ENCODE measurements at regions of chr10 and their contacts with region 1.

Region 1: GRCh38 chr10:119165171-119166110 is at the start of gene SFXN4:
- DNase-seq: peak; percentile 76 to 87 (median 85)
- H3K4me3 ChIP-seq: peak within 1 kb of the TSS; percentile 73 to 92
- H3K4me3 Mint-ChIP-seq: peak within 1 kb of the TSS; percentile 90 to 94 (median 92)
- H3K27ac ChIP-seq: peak within 1 kb of the TSS; percentile 65
- H3K27ac Mint-ChIP-seq: peak within 1 kb of the TSS; percentile 87 to 96 (median 95)
- H3K4me1 ChIP-seq: peaks cover 20% of the 10 kb centered on the region
- H3K4me1 Mint-ChIP-seq: peaks cover 9 to 43% (median 27%) of the 10 kb centered on the region in 4 donors
- H3K27me3 ChIP-seq: no peaks in the 10 kb centered on the region
- H3K27me3 Mint-ChIP-seq: no peaks in the 10 kb centered on the region
- total RNA-seq, gene SFXN4: 17.2 to 18.5 TPM

Region 2: GRCh38 chr10:119028900-119029612 is 136.4 kb before region 1 on chr10:
- CTCF ChIA-PET with region 1: no interaction called
- POLR2A ChIA-PET with region 1: interaction called, 12 read pairs
- intact Hi-C with region 1: no loop called
- DNase-seq: peak; percentile 69 to 84 (median 73)
- H3K4me3 ChIP-seq: peak overlapping the region in 1 of 2 donors; percentile 28
- H3K4me3 Mint-ChIP-seq: peak overlapping the region; percentile 78 to 85 (median 80)
- H3K27ac ChIP-seq: no peak overlapping the region
- H3K27ac Mint-ChIP-seq: peak overlapping the region in 3 of 7 donors; percentile 64 to 73 (median 72)
- H3K4me1 ChIP-seq: peaks cover 7% of the 10 kb centered on the region
- H3K4me1 Mint-ChIP-seq: peaks cover 6 to 30% (median 15%) of the 10 kb centered on the region in 4 donors
- H3K27me3 ChIP-seq: no peaks in the 10 kb centered on the region
- H3K27me3 Mint-ChIP-seq: no peaks in the 10 kb centered on the region

Region 3: DNA sequence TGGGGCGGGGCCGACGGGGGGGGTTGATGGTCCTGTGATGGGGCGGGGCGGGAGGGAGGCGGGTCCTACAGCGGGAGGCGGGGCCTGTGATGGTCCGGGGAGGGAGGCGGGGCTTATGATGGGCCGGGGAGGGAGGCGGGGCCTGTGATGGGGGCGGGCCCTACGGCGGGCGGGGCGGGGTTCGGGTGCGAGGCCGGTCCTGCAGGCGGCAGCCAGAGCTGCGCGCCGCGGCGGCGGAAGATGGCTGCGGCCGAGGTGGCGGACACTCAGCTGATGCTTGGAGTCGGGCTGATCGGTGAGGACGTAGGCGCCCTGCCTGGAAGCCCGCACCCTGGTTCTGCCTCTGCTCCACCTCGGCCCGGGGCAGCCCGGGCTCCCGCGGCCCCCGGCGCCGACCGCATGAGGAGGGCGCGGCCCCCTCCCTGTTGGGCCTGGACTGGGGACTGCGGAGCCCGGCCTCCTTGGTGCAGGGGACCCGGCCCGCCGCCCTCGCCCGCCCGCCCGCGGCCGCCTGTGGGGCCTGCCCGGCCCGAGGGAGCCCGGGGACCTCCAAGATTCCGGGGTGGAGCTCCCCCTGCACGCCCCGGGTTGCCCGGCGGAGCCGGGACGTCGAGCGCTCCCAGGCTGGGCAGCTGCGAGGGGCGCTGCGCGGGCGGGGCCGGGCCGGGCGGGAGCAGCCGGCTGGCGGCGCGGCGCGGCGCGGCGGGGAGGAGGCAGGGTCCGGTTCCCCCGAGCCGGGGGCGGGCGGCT is 61.4 kb before region 1 on chr10 and contains the start of gene DENND10:
- CTCF ChIA-PET with region 1: interaction called, 5 read pairs
- POLR2A ChIA-PET with region 1: interaction called, 7 read pairs
- intact Hi-C with region 1: loop called (anchors 2 kb)
- DNase-seq: peak; percentile 56 to 71 (median 60)
- H3K4me3 ChIP-seq: peak within 1 kb of the TSS; percentile 52 to 59
- H3K4me3 Mint-ChIP-seq: peak within 1 kb of the TSS; percentile 79 to 88 (median 86)
- H3K27ac ChIP-seq: peak within 1 kb of the TSS; percentile 54
- H3K27ac Mint-ChIP-seq: peak within 1 kb of the TSS; percentile 72 to 95 (median 91)
- H3K4me1 ChIP-seq: peaks cover 34% of the 10 kb centered on the region
- H3K4me1 Mint-ChIP-seq: peaks cover 14 to 46% (median 34%) of the 10 kb centered on the region in 4 donors
- H3K27me3 ChIP-seq: no peaks in the 10 kb centered on the region
- H3K27me3 Mint-ChIP-seq: no peaks in the 10 kb centered on the region
- total RNA-seq, gene DENND10: 48.0 to 53.4 TPM

Region 4: GRCh38 chr10:119131512-119132240 is 33.8 kb before region 1 on chr10:
- CTCF ChIA-PET with region 1: interaction called, 4 read pairs
- POLR2A ChIA-PET with region 1: interaction called, 10 read pairs
- intact Hi-C with region 1: no loop called
- DNase-seq: peak; percentile 42 to 57 (median 50)
- H3K4me3 ChIP-seq: peak overlapping the region; percentile 3 to 44
- H3K4me3 Mint-ChIP-seq: peak overlapping the region; percentile 87 to 96 (median 92)
- H3K27ac ChIP-seq: peak overlapping the region; percentile 65
- H3K27ac Mint-ChIP-seq: peak overlapping the region; percentile 86 to 99 (median 95)
- H3K4me1 ChIP-seq: peaks cover 40% of the 10 kb centered on the region
- H3K4me1 Mint-ChIP-seq: peaks cover 31 to 49% (median 38%) of the 10 kb centered on the region in 4 donors
- H3K27me3 ChIP-seq: no peaks in the 10 kb centered on the region
- H3K27me3 Mint-ChIP-seq: no peaks in the 10 kb centered on the region

Region 5: DNA sequence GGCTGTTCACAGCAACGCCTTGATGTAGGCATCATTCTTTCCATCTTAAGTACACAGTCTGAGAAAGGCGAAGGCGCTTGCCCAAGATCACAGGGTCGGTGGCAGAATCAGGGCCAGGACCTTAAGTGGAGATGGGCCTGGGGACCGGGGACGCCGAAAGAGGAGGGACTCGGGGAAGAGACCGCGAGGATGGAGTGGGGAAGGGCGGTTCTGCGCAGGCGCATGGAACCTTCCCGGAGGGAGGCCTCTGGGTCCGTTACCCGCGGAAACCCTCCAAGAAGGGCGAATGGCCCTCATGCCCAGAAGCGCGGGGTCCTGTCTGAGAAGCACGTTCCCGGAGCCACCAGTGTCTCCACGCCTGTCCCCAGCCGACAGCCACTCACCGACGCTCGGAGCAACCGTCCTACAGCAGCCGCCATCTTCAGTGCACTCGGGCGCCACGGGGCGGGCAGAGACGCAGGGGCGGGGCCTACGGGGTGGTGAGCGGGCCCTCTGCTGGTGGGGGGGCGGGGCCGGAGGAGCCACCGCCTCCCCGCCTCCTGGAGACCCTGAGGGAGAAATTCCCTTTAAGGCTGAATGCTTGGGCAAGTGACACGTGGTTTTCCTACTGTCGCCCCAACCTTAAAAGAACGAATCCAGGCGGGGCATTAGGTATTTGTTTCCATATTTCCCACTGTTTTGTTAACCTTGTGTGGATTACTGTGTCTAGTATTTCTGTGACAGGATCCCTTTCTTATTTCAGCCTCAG is 13.1 kb after region 1 on chr10 and contains the start of gene PRDX3:
- CTCF ChIA-PET with region 1: interaction called, 4 read pairs
- POLR2A ChIA-PET with region 1: interaction called, 9 read pairs
- intact Hi-C with region 1: loop called (anchors 1 kb)
- DNase-seq: peak; percentile 89 to 92 (median 89)
- H3K4me3 ChIP-seq: peak within 1 kb of the TSS; percentile 96 to 100
- H3K4me3 Mint-ChIP-seq: peak within 1 kb of the TSS; percentile 89 to 99 (median 96)
- H3K27ac ChIP-seq: peak within 1 kb of the TSS; percentile 81
- H3K27ac Mint-ChIP-seq: peak within 1 kb of the TSS; percentile 85 to 98 (median 96)
- H3K4me1 ChIP-seq: peaks cover 44% of the 10 kb centered on the region
- H3K4me1 Mint-ChIP-seq: peaks cover 16 to 51% (median 34%) of the 10 kb centered on the region in 4 donors
- H3K27me3 ChIP-seq: no peaks in the 10 kb centered on the region
- H3K27me3 Mint-ChIP-seq: no peaks in the 10 kb centered on the region
- total RNA-seq, gene PRDX3: 34.3 to 38.2 TPM

Region 6: DNA sequence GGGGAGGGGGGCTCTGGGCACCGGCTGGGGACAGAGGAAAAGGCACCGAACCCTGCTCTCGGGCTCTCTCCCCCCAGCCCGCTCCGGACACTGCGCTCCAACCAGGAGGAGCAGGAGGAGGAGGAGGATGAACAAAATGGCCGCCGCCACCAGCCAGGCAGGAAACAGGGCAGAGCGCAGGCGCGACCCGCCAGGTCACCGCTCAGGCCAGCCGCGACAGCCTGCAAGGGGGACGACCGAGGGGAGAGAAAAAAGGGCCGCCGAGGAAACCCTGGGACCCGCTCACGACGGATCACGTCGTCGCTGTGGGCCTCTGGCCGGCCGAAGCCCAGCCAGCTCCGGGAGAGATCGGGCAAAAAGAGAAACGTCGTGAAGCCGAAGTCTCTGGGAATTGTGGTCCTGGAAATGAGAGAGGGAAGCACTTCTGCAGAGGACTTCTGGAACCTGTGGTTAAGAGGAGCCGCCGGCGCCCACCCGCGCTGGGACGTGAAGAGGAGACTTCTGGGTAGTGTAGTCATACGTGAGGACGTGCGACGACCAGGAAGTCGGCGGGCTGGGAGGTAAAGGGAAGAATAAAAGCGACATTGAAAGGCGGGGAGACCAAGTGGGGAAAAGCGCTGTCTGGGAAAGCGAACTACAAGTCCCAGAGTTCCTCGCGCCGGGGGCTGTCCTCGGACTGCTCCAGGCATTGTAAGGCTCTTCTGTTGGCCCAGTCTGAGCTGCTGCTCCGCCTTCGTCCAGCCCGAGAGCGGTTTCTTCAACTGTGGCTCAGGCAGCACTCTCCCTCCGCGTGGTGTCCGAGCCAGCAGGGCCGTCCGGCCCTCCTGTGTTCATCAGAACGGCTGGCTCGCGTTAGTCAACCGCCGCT is 431.3 kb after region 1 on chr10 and contains the start of gene TIAL1:
- CTCF ChIA-PET with region 1: no interaction called
- POLR2A ChIA-PET with region 1: no interaction called
- intact Hi-C with region 1: loop called (anchors 1 kb)
- DNase-seq: peak; percentile 89 to 97 (median 91)
- H3K4me3 ChIP-seq: peak within 1 kb of the TSS; percentile 83 to 99
- H3K4me3 Mint-ChIP-seq: peak within 1 kb of the TSS; percentile 93 to 100 (median 99)
- H3K27ac ChIP-seq: peak within 1 kb of the TSS; percentile 98
- H3K27ac Mint-ChIP-seq: peak within 1 kb of the TSS; percentile 97 to 100 (median 99)
- H3K4me1 ChIP-seq: peaks cover 43% of the 10 kb centered on the region
- H3K4me1 Mint-ChIP-seq: peaks cover 37 to 57% (median 44%) of the 10 kb centered on the region in 4 donors
- H3K27me3 ChIP-seq: no peaks in the 10 kb centered on the region
- H3K27me3 Mint-ChIP-seq: no peaks in the 10 kb centered on the region
- total RNA-seq, gene TIAL1: 201 to 212 TPM